WTC11 (cell line): ENCODE measurements at regions of chr1 and their contacts with region 1.

Region 1: GRCh38 chr1:151968058-151968457 is 25.6 kb downstream of the S100A10 start:
- DNase-seq: peak; percentile 35
- ATAC-seq: peak; percentile 89
- H3K4me3 Mint-ChIP-seq: no peak overlapping the region
- H3K27ac Mint-ChIP-seq: no peak overlapping the region
- H3K4me1 Mint-ChIP-seq: peaks cover 38% of the 10 kb centered on the region
- H3K27me3 Mint-ChIP-seq: no peaks in the 10 kb centered on the region; the same call in 1 of the 2 replicates
- CTCF ChIP-seq: peak; percentile 57; the same call in 1 of the 2 replicates

Region 2: GRCh38 chr1:151909150-151910149 is 58.6 kb before region 1 on chr1 and contains the start of gene THEM4:
- CTCF ChIA-PET with region 1: interaction called, 12 read pairs
- POLR2A ChIA-PET with region 1: no interaction called
- DNase-seq: peak; percentile 99
- ATAC-seq: peak; percentile 97
- H3K4me3 Mint-ChIP-seq: peak within 1 kb of the TSS; percentile 94
- H3K27ac Mint-ChIP-seq: peak within 1 kb of the TSS; percentile 100
- H3K4me1 Mint-ChIP-seq: peaks cover 12% of the 10 kb centered on the region
- H3K27me3 Mint-ChIP-seq: peaks cover 7% of the 10 kb centered on the region
- CTCF ChIP-seq: no peak
- total RNA-seq, gene THEM4: 8.0 to 10.9 TPM (median 8.8 TPM) in 3 replicates

Region 3: DNA sequence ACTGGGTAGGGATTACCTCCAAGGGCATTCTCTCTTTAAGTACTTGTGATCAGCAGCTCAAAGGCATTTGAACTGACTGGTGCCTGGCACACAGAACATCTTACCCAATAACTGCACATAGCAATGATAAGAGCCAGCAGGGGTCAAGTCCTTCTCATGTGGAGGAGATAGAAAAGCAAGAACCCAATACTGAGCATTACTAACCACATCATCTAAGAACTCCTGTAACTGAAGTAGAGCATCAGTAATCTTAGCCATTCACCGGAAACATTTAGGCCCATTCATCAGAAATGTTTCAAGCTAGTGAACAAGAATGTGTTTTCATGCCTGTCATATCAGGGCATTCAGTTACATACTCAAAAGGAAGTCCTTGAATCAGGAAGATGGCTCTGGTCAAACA is 25.2 kb before region 1 on chr1:
- CTCF ChIA-PET with region 1: interaction called, 12 read pairs
- POLR2A ChIA-PET with region 1: no interaction called
- DNase-seq: no peak
- ATAC-seq: no peak
- H3K4me3 Mint-ChIP-seq: no peak overlapping the region
- H3K27ac Mint-ChIP-seq: no peak overlapping the region
- H3K4me1 Mint-ChIP-seq: peaks cover 16% of the 10 kb centered on the region
- H3K27me3 Mint-ChIP-seq: no peaks in the 10 kb centered on the region
- CTCF ChIP-seq: no peak

Region 4: GRCh38 chr1:151984313-151984956 is 16.4 kb after region 1 on chr1:
- CTCF ChIA-PET with region 1: interaction called, 27 read pairs
- POLR2A ChIA-PET with region 1: interaction called, 3 read pairs
- DNase-seq: no peak
- ATAC-seq: no peak
- H3K4me3 Mint-ChIP-seq: no peak overlapping the region
- H3K27ac Mint-ChIP-seq: no peak overlapping the region
- H3K4me1 Mint-ChIP-seq: peaks cover 31% of the 10 kb centered on the region
- H3K27me3 Mint-ChIP-seq: no peaks in the 10 kb centered on the region
- CTCF ChIP-seq: no peak

Region 5: GRCh38 chr1:152013664-152014237 is 45.7 kb after region 1 on chr1:
- CTCF ChIA-PET with region 1: interaction called, 49 read pairs
- POLR2A ChIA-PET with region 1: no interaction called
- DNase-seq: peak; percentile 66
- ATAC-seq: peak; percentile 74
- H3K4me3 Mint-ChIP-seq: no peak overlapping the region
- H3K27ac Mint-ChIP-seq: peak overlapping the region; percentile 66
- H3K4me1 Mint-ChIP-seq: peaks cover 27% of the 10 kb centered on the region
- H3K27me3 Mint-ChIP-seq: no peaks in the 10 kb centered on the region
- CTCF ChIP-seq: no peak